ENCODE measurements at regions of chr9 and their contacts with region 1.

Region 1: GRCh38 chr9:21559424-21560280 is 77.5 kb upstream of the IFNE start:
- DNase-seq: peak; percentile 48 to 65 (median 52)
- H3K4me3 ChIP-seq: peak overlapping the region; percentile 59 to 65
- H3K4me3 Mint-ChIP-seq: peak overlapping the region; percentile 81 to 97 (median 88)
- H3K27ac ChIP-seq: no peak overlapping the region
- H3K27ac Mint-ChIP-seq: peak overlapping the region in 3 of 7 donors; percentile 48 to 80 (median 79)
- H3K4me1 ChIP-seq: peaks cover 21% of the 10 kb centered on the region
- H3K4me1 Mint-ChIP-seq: peaks cover 16 to 27% (median 21%) of the 10 kb centered on the region in 4 donors
- H3K27me3 ChIP-seq: peaks cover 32% of the 10 kb centered on the region
- H3K27me3 Mint-ChIP-seq: peaks cover 22% of the 10 kb centered on the region in 2 donors

Region 2: DNA sequence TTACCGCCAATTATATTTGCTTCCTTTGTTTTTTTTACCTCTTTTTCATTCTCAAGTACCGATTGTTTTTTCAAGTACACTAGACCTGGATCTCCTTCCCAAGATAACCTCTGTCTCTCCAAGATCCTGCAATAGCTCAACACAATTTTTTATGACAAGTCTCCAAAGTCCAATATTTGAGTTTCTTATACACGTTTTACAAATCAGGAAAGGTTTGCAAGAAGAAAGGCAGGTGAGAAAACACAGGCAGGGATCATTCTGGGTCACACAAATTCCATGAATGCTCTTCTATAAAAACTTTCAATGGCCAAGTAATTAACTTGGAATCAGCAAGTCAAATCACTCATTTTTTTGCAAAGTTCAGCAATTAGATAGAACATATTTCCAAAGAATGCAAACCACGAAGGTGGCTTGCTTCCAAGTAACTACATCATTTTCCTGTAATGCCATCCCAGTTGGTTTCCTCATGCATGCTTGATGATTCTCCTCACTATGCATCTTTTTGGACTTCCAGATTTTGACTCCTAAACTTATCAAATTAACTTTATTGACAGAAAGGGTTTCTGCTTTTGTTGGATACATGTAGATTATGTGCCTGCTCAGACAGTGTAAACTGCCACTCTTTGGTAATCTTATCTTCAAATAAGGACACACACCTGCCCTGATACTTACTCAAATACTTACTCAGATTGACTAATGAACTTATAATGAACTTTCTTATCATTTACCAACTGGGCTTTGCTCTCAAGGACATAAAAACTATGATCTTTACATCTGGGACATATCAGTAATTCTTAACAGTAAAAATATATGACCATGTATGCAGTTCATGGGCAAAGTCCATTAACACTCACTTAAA is 52.8 kb before region 1 on chr9:
- CTCF ChIA-PET with region 1: no interaction called
- POLR2A ChIA-PET with region 1: no interaction called
- intact Hi-C with region 1: loop called (anchors 10 kb)
- DNase-seq: no peak
- H3K4me3 ChIP-seq: no peak overlapping the region
- H3K4me3 Mint-ChIP-seq: peak overlapping the region in 4 of 8 donors; percentile 5 to 71 (median 51)
- H3K27ac ChIP-seq: no peak overlapping the region
- H3K27ac Mint-ChIP-seq: peak overlapping the region in 2 of 7 donors; percentile 6 to 14
- H3K4me1 ChIP-seq: peaks cover 29% of the 10 kb centered on the region
- H3K4me1 Mint-ChIP-seq: peaks cover 0 to 8% (median 3%) of the 10 kb centered on the region in 4 donors
- H3K27me3 ChIP-seq: no peaks in the 10 kb centered on the region
- H3K27me3 Mint-ChIP-seq: peaks cover 0 to 3% of the 10 kb centered on the region in 2 donors

Region 3: GRCh38 chr9:21576331-21577189 is 16.9 kb after region 1 on chr9:
- CTCF ChIA-PET with region 1: interaction called, 8 read pairs
- POLR2A ChIA-PET with region 1: interaction called, 12 read pairs
- intact Hi-C with region 1: loop called (anchors 2 kb)
- DNase-seq: peak; percentile 31 to 56 (median 43)
- H3K4me3 ChIP-seq: no peak overlapping the region
- H3K4me3 Mint-ChIP-seq: peak overlapping the region; percentile 3 to 79 (median 55)
- H3K27ac ChIP-seq: no peak overlapping the region
- H3K27ac Mint-ChIP-seq: peak overlapping the region; percentile 19 to 94 (median 81)
- H3K4me1 ChIP-seq: peaks cover 35% of the 10 kb centered on the region
- H3K4me1 Mint-ChIP-seq: peaks cover 24 to 39% (median 34%) of the 10 kb centered on the region in 4 donors
- H3K27me3 ChIP-seq: no peaks in the 10 kb centered on the region
- H3K27me3 Mint-ChIP-seq: no peaks in the 10 kb centered on the region

Region 4: GRCh38 chr9:21616082-21616778 is 56.6 kb after region 1 on chr9:
- CTCF ChIA-PET with region 1: no interaction called
- POLR2A ChIA-PET with region 1: no interaction called
- intact Hi-C with region 1: loop called (anchors 2 kb)
- DNase-seq: no peak
- H3K4me3 ChIP-seq: no peak overlapping the region
- H3K4me3 Mint-ChIP-seq: no peak overlapping the region
- H3K27ac ChIP-seq: no peak overlapping the region
- H3K27ac Mint-ChIP-seq: no peak overlapping the region
- H3K4me1 ChIP-seq: peaks cover 29% of the 10 kb centered on the region
- H3K4me1 Mint-ChIP-seq: peaks cover 14 to 36% (median 22%) of the 10 kb centered on the region in 4 donors
- H3K27me3 ChIP-seq: no peaks in the 10 kb centered on the region
- H3K27me3 Mint-ChIP-seq: peaks cover 0 to 3% of the 10 kb centered on the region in 2 donors

Region 5: DNA sequence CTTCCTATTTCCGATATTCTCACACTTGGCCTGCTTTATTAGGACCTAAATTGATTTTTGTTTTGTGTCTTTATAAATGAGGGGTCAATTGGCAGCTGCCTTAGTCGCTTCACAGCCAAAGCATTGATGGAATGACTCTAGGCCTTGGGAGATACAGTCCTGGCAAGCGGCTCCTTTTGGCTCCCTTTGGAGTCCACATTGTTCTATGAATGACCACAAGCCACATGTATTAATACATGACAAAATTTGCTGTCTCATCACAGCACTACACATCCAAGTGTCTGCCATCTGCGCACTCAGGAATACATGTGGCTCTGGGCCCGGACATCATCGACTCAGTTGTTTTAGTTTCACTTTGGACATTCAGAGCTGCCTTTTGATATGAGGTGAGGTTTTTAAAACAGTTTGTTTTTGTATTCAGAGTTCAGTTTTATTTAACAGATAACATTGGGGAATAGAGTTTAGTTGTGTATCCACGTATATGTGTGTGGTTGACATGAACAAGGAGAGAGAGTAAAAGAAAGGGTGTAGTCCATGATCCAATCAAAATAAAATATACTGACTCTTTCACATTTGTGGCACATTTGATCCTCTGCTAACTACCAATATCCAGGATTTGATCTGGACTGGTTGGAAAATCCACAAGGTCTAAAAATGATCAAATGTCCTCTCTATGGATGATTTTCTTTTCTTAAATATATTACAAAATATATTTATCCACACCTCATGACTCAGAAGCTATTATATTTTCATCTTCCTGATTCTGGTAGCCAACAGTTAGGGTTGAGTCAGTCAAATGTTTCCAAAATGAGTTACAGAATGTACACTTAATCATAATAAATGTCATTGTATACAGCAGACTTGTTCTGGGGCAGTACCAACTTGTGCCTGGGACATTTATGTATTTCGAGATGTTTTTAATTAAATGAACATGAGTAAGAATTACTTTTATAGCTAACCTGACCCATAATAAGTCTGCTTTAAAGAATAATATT is 128.8 kb after region 1 on chr9:
- CTCF ChIA-PET with region 1: interaction called, 4 read pairs
- POLR2A ChIA-PET with region 1: no interaction called
- intact Hi-C with region 1: loop called (anchors 5 kb)
- DNase-seq: no peak
- H3K4me3 ChIP-seq: no peak overlapping the region
- H3K4me3 Mint-ChIP-seq: peak overlapping the region in 7 of 8 donors; percentile 20 to 66 (median 50)
- H3K27ac ChIP-seq: no peak overlapping the region
- H3K27ac Mint-ChIP-seq: peak overlapping the region in 2 of 7 donors; percentile 7 to 66
- H3K4me1 ChIP-seq: peaks cover 5% of the 10 kb centered on the region
- H3K4me1 Mint-ChIP-seq: peaks cover 3 to 14% (median 6%) of the 10 kb centered on the region in 4 donors
- H3K27me3 ChIP-seq: no peaks in the 10 kb centered on the region
- H3K27me3 Mint-ChIP-seq: peaks cover 0 to 2% of the 10 kb centered on the region in 2 donors

Region 6: DNA sequence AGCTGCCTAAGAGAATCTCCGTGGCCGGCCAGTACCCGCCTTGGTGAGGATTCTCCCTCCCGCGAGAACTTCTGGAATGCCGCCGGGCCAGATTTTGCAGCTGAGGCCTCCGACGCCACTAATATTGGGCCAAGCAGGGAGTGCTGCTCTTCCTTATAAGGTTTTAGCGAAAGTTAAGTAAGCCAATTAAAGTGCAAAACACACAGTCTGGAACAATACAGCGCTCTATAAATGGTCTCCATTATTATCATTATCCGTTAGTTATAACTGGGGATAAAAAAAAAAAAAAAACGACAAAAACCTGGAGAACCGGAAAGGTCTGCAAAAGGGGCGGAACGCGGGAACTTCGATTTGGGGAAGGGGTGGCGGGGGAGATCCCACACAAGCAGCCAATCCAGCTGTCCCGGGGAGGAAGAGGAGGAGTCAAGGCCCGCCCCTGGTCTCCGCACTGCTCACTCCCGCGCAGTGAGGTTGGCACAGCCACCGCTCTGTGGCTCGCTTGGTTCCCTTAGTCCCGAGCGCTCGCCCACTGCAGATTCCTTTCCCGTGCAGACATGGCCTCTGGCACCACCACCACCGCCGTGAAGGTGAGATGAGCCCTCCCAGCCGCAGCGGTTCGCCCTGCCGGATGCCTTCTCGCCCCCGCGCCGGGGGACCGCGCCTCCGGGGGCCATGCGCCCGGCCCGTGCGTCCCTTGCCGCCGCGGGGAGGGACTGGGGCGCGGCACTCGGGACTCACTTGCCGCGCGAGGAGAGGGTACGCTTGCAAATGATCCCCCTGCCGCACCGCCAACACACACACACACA is 242.7 kb after region 1 on chr9 and contains the start of gene MTAP:
- CTCF ChIA-PET with region 1: no interaction called
- POLR2A ChIA-PET with region 1: no interaction called
- intact Hi-C with region 1: no loop called
- DNase-seq: peak in 4 of 5 donors; percentile 66 to 79 (median 76)
- H3K4me3 ChIP-seq: peak within 1 kb of the TSS; percentile 69 to 86
- H3K4me3 Mint-ChIP-seq: peak within 1 kb of the TSS; percentile 95 to 100 (median 99)
- H3K27ac ChIP-seq: peak within 1 kb of the TSS; percentile 50
- H3K27ac Mint-ChIP-seq: peak within 1 kb of the TSS; percentile 94 to 99 (median 98)
- H3K4me1 ChIP-seq: peaks cover 37% of the 10 kb centered on the region
- H3K4me1 Mint-ChIP-seq: peaks cover 28 to 52% (median 39%) of the 10 kb centered on the region in 4 donors
- H3K27me3 ChIP-seq: no peaks in the 10 kb centered on the region
- H3K27me3 Mint-ChIP-seq: peaks cover 4 to 5% of the 10 kb centered on the region in 2 donors
- total RNA-seq, gene MTAP: 45.5 to 47.9 TPM